Keratinocyte (primary cell): ENCODE measurements at regions of chr16 and their contacts with region 1.

Region 1: GRCh38 chr16:84449171-84450140 is 55.0 kb downstream of the MEAK7 start:
- DNase-seq: no peak
- H3K4me3 ChIP-seq: no peak overlapping the region
- H3K27ac ChIP-seq: no peak overlapping the region
- H3K4me1 ChIP-seq: no peaks in the 10 kb centered on the region
- H3K27me3 ChIP-seq: no peaks in the 10 kb centered on the region
- CTCF ChIP-seq: no peak

Region 2: GRCh38 chr16:84266451-84266850 is 183.0 kb before region 1 on chr16:
- dilution Hi-C with region 1: loop called (anchors 25 kb)
- DNase-seq: no peak
- H3K4me3 ChIP-seq: no peak overlapping the region
- H3K27ac ChIP-seq: no peak overlapping the region
- H3K4me1 ChIP-seq: no peaks in the 10 kb centered on the region
- H3K27me3 ChIP-seq: peaks cover 5% of the 10 kb centered on the region
- CTCF ChIP-seq: no peak